ENCODE measurements at regions of chr11 and their contacts with region 1.

Region 1: DNA sequence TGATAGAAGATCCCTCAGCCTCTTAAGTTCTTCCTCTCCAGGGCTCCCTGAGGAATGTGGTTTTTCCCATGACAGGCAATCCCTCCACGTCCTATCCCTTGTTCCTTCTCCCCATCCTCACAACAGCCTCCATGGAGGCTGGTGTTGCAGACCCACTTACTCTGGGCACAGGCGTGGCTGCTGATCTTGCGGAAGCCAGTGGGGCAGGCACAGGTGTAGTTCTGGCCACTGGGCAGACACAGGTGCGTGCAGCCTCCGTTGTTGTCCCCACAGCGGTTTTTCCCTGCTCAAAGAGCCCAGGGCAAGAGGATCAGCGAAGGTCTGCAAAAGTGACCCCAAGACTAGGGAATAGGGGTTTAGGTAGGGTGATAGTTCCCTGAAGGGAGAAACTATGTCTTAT is 29.1 kb downstream of the LRP4 start:
- DNase-seq: no peak
- CTCF ChIP-seq: no peak

Region 2: GRCh38 chr11:46952553-46952952 is 63.3 kb after region 1 on chr11:
- in situ Hi-C with region 1: no loop called
- DNase-seq: no peak
- CTCF ChIP-seq: no peak

Region 3: GRCh38 chr11:47154616-47155570 is 265.6 kb after region 1 on chr11:
- in situ Hi-C with region 1: loop called (anchors 5 kb)
- DNase-seq: no peak
- CTCF ChIP-seq: no peak